ENCODE measurements at regions of chr4 and their contacts with region 1.

Region 1: DNA sequence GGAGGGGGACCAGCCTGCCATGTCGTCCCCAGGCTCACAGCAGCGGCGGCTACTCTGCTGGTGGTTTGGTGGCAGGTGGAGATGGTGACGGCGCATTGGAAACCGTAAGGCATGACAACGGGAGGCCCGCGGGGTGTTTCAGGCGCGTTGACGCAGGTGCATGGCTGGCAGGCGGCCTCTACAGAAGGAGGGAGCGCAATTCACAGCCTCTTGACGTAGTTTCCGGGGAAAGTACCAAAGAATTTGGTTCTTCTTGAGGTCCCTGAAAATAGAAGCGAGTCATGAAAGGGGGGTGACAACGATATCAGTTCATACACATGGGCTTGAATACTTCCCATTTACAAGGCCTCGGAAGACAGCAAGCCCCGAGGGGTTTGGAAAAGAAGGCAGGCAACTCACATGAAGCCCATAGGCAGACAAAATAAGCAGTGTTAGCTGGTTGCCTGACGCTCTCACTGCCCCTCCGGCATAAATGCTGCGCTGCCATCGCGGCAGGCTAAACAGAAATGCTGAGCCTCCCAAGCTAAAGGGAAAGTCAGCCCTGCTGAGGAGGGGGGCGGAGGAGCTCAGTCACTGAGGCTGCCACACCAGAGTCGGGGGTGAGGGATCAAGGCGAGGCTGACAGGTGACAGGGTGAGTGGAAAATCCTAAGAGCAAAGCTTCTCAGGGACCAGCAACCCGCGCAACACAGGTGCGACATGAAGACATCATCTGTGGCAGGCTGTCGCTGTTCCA is 52.3 kb upstream of the PDLIM3 start:
- DNase-seq: no peak
- H3K4me3 ChIP-seq: no peak overlapping the region
- H3K27ac ChIP-seq: no peak overlapping the region
- H3K4me1 ChIP-seq: peaks cover 4% of the 10 kb centered on the region
- H3K27me3 ChIP-seq: no peaks in the 10 kb centered on the region
- CTCF ChIP-seq: no peak
- EP300 ChIP-seq: no peak
- POLR2A ChIP-seq: no peak

Region 2: GRCh38 chr4:185203486-185204237 is 383.9 kb before region 1 on chr4 and contains the start of gene CFAP97:
- intact Hi-C with region 1: loop called in 1 of 4 experiments (anchors 10 kb)
- DNase-seq: peak; percentile 92 to 96 (median 94)
- H3K4me3 ChIP-seq: peak within 1 kb of the TSS; percentile 88
- H3K27ac ChIP-seq: peak within 1 kb of the TSS; percentile 94 to 97
- H3K4me1 ChIP-seq: peaks cover 3% of the 10 kb centered on the region
- H3K27me3 ChIP-seq: no peaks in the 10 kb centered on the region
- CTCF ChIP-seq: peak in 2 of 3 donors; percentile 3 to 33
- EP300 ChIP-seq: no peak
- POLR2A ChIP-seq: peak; percentile 89
- total RNA-seq, gene CFAP97: 28.8 to 57.6 (median 46.7) TPM

Measured in ovary (tissue), 10 donors.